ENCODE measurements at regions of chr6 and their contacts with region 1.

Region 1: GRCh38 chr6:24431045-24431451 is 28.3 kb downstream of the MRS2 start:
- DNase-seq: no peak

Region 2: GRCh38 chr6:24566020-24566767 is 135.1 kb after region 1 on chr6:
- intact Hi-C with region 1: no loop called
- DNase-seq: no peak

Region 3: DNA sequence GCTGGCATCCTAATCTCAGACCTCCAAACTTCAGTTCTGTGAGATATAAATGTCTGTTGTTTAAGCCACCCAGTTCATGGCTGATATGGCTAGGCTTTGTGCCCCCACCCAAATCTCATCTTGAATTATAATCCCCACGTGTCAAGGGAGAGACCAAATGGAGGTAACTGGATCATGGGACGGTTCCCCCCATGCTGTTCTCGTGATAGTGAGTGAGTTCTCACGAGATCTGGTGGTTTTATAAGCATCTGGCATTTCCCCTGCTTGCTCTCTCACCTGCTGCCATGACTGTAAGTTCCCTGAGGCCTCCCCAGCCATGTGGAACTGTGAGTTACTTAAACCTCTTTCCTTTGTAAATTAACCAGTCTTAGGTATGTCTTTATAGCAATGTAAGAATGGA is 158.3 kb after region 1 on chr6:
- intact Hi-C with region 1: no loop called
- DNase-seq: no peak

Region 4: DNA sequence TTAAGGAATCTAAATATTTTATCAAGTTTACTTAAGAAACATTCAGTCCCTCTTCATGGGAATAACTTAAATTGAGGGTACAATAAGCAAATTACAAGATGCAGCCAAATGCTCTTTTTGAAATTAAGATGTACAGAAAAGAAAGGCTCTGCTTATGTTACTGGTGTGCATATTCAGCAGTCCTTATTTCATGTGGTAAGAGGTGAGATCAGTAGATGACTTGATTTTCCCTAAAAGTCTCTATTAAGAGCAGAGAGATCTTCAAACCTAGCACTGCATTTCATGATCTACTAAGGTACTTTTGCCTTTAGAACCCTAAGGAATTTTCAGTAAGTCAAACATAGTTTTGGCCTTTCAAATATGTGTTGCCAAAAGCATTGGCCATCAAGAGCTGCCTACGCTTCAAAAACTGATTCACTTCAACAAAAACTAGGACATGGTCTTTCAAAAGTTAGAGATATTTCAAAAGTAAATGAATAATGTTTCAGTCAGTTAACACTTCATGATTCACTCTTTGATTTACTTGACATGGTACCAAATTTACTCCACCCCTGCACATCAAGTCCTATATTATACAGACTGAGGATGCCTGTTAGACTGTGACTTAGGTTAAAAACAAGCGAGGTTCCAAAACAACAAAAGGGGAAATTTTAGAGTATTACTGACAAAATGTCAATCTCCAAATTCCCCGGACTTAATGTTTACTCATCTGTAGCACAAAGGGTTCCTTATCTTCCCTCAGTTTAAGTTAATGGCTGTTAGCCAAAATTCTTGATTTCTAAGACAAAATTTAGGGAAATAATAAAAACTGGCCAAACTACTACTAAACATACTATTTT is 268.7 kb after region 1 on chr6:
- intact Hi-C with region 1: loop called (anchors 5 kb)
- DNase-seq: no peak

Measured in posterior cingulate gyrus (tissue), 11 donors.